Breast epithelium (tissue), 4 donors: ENCODE measurements at regions of chr20 and their contacts with region 1.

Region 1: GRCh38 chr20:61203320-61203719 is 48.7 kb upstream of the CDH4 start:
- DNase-seq: no peak
- H3K4me3 ChIP-seq: no peak overlapping the region
- H3K27ac ChIP-seq: no peak overlapping the region
- H3K4me1 ChIP-seq: no peaks in the 10 kb centered on the region
- H3K27me3 ChIP-seq: peaks cover 0 to 22% of the 10 kb centered on the region in 2 donors
- CTCF ChIP-seq: no peak
- POLR2A ChIP-seq: no peak

Region 2: GRCh38 chr20:61139031-61139430 is 64.3 kb before region 1 on chr20:
- intact Hi-C with region 1: no loop called
- DNase-seq: no peak
- H3K4me3 ChIP-seq: no peak overlapping the region
- H3K27ac ChIP-seq: no peak overlapping the region
- H3K4me1 ChIP-seq: no peaks in the 10 kb centered on the region
- H3K27me3 ChIP-seq: no peaks in the 10 kb centered on the region
- CTCF ChIP-seq: no peak
- POLR2A ChIP-seq: no peak

Region 3: DNA sequence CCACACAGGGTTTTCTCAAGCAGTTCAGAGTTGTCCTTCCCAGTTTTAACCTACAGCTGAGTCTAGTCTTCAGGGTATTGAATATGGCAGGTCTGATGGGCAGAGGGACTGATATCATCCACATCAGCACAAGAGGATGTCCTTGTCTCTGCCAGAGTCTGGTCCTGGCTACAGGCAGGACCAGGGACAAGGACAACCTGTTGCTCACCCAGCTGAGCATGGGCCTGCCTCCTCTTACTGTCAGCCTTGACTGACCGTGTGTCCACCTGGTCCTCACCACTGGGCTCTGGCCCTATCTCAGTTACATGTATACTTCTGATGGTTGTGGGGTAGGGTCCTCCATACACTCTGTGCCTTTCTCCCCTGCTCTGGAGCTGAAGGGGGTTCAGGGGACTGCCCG is 49.1 kb before region 1 on chr20:
- intact Hi-C with region 1: loop called (anchors 2 kb)
- DNase-seq: no peak
- H3K4me3 ChIP-seq: no peak overlapping the region
- H3K27ac ChIP-seq: no peak overlapping the region
- H3K4me1 ChIP-seq: no peaks in the 10 kb centered on the region
- H3K27me3 ChIP-seq: no peaks in the 10 kb centered on the region
- CTCF ChIP-seq: no peak
- POLR2A ChIP-seq: no peak

Region 4: GRCh38 chr20:61307686-61308478 is 104.6 kb after region 1 on chr20:
- intact Hi-C with region 1: loop called (anchors 5 kb)
- DNase-seq: no peak
- H3K4me3 ChIP-seq: no peak overlapping the region
- H3K27ac ChIP-seq: no peak overlapping the region
- H3K4me1 ChIP-seq: no peaks in the 10 kb centered on the region
- H3K27me3 ChIP-seq: peaks cover 0 to 4% of the 10 kb centered on the region in 2 donors
- CTCF ChIP-seq: no peak
- POLR2A ChIP-seq: no peak